Panc1 (cell line): ENCODE measurements at regions of chr2 and their contacts with region 1.

Region 1: GRCh38 chr2:101745711-101746387 is 48.3 kb downstream of the MAP4K4 start:
- DNase-seq: no peak
- ATAC-seq: 0 out of 2 replicates have a peak, but pooled peaks have one; percentile 26
- H3K4me3 ChIP-seq: no peak overlapping the region
- H3K27ac ChIP-seq: no peak overlapping the region
- H3K4me1 ChIP-seq: peaks cover 30% of the 10 kb centered on the region
- H3K27me3 ChIP-seq: no peaks in the 10 kb centered on the region
- CTCF ChIP-seq: no peak

Region 2: GRCh38 chr2:101396316-101396717 is 349.5 kb before region 1 on chr2:
- CTCF ChIA-PET with region 1: no interaction called
- POLR2A ChIA-PET with region 1: interaction called, 15 read pairs
- in situ Hi-C with region 1: no loop called
- intact Hi-C with region 1: no loop called
- DNase-seq: peak; percentile 41
- ATAC-seq: peak; percentile 59
- H3K4me3 ChIP-seq: no peak overlapping the region
- H3K27ac ChIP-seq: no peak overlapping the region
- H3K4me1 ChIP-seq: no peaks in the 10 kb centered on the region
- H3K27me3 ChIP-seq: peaks cover 11% of the 10 kb centered on the region
- CTCF ChIP-seq: no peak

Region 3: DNA sequence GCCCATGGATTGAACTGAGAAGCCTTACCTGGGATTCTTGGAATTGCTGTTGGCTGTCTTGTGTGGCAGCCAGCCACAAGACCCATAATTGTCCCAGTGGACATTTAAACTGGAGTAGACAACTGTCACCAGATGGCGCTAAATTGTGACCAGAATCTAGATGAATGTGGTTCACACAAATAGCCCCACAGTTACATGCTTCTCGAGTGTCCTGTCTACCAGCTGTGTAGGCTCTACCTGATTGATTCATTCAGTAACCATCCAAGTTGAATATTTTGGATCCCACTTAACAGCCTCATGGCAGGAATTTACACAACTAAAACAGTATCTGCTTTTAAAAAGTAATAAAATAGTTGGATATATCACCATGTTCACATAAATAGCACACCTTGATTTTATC is 24.9 kb after region 1 on chr2:
- CTCF ChIA-PET with region 1: interaction called, 11 read pairs
- POLR2A ChIA-PET with region 1: no interaction called
- in situ Hi-C with region 1: no loop called
- intact Hi-C with region 1: no loop called
- DNase-seq: no peak
- ATAC-seq: peak; percentile 80
- H3K4me3 ChIP-seq: no peak overlapping the region
- H3K27ac ChIP-seq: no peak overlapping the region
- H3K4me1 ChIP-seq: peaks cover 31% of the 10 kb centered on the region
- H3K27me3 ChIP-seq: no peaks in the 10 kb centered on the region
- CTCF ChIP-seq: peak; percentile 78

Region 4: GRCh38 chr2:101793277-101793969 is 47.6 kb after region 1 on chr2:
- CTCF ChIA-PET with region 1: no interaction called
- POLR2A ChIA-PET with region 1: no interaction called
- in situ Hi-C with region 1: no loop called
- intact Hi-C with region 1: no loop called
- DNase-seq: no peak
- ATAC-seq: no peak
- H3K4me3 ChIP-seq: no peak overlapping the region
- H3K27ac ChIP-seq: no peak overlapping the region
- H3K4me1 ChIP-seq: no peaks in the 10 kb centered on the region
- H3K27me3 ChIP-seq: no peaks in the 10 kb centered on the region
- CTCF ChIP-seq: peak; percentile 19; the same call in 1 of the 2 replicates

Region 5: GRCh38 chr2:102193074-102193473 is 447.2 kb after region 1 on chr2:
- CTCF ChIA-PET with region 1: no interaction called
- POLR2A ChIA-PET with region 1: no interaction called
- in situ Hi-C with region 1: no loop called
- intact Hi-C with region 1: no loop called
- DNase-seq: no peak
- ATAC-seq: no peak
- H3K4me3 ChIP-seq: no peak overlapping the region
- H3K27ac ChIP-seq: no peak overlapping the region
- H3K4me1 ChIP-seq: no peaks in the 10 kb centered on the region
- H3K27me3 ChIP-seq: no peaks in the 10 kb centered on the region
- CTCF ChIP-seq: no peak